Upper lobe of right lung (tissue), 1 donor: ENCODE measurements at regions of chr2 and their contacts with region 1.

Region 1: DNA sequence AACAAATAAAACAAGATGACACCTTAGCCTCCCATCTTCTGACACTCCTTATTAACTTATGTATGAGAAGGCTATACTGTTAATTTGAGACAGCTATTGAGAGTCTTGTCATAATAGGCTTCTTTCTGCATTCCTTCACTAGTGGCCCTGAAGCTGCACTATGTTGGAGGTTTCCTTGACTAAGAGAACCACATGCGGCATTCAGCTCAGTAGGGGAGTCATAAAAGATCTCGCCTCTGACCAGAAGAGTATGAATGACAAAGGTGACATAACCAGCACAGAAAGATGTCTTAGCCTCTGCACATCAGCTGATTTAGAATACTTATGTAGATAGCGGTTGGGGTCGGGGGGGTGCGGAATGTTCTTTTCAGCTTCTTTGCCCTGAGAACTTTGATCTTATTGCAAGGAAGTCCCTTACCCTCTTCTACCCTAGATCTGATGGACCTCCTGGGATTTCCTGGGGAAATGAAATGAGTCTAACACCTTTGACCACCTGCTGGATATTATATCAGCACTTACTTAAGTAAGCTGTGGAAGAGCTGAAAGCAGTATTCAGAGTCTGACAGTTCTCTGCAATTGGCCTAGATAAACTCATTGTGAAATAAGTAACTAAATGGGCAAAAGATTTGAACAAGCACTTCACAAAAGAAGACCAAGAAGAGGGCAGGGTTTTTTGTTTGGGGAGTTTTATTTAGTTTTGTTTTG is 24.2 kb downstream of the RBM45 start:
- DNase-seq: no peak
- ATAC-seq: no peak
- H3K4me3 ChIP-seq: no peak overlapping the region
- H3K27ac ChIP-seq: no peak overlapping the region
- H3K4me1 ChIP-seq: no peaks in the 10 kb centered on the region
- H3K27me3 ChIP-seq: no peaks in the 10 kb centered on the region
- CTCF ChIP-seq: no peak

Region 2: GRCh38 chr2:178280244-178280852 is 143.9 kb after region 1 on chr2:
- intact Hi-C with region 1: loop called (anchors 10 kb)
- DNase-seq: no peak
- ATAC-seq: peak; percentile 96
- H3K4me3 ChIP-seq: no peak overlapping the region
- H3K27ac ChIP-seq: no peak overlapping the region
- H3K4me1 ChIP-seq: no peaks in the 10 kb centered on the region
- H3K27me3 ChIP-seq: no peaks in the 10 kb centered on the region
- CTCF ChIP-seq: peak; percentile 87